ENCODE measurements at regions of chr11 and their contacts with region 1.

Region 1: GRCh38 chr11:2420502-2421225 is 20.1 kb downstream of the TSSC4 start:
- DNase-seq: peak; percentile 82 to 93 (median 91)
- ATAC-seq: peak; percentile 97
- H3K4me3 ChIP-seq: no peak overlapping the region
- H3K27ac ChIP-seq: no peak overlapping the region
- H3K4me1 ChIP-seq: peaks cover 0 to 54% of the 10 kb centered on the region in 2 experiments; a peak in 3 of 5 replicates
- H3K27me3 ChIP-seq: peaks cover 3 to 65% of the 10 kb centered on the region in 2 experiments; a peak in 4 of 5 replicates
- CTCF ChIP-seq: peak; percentile 86 to 92 (median 91)
- EP300 ChIP-seq: no peak
- POLR2A ChIP-seq: no peak
- RAD21 ChIP-seq: peak; percentile 86 to 92

Region 2: DNA sequence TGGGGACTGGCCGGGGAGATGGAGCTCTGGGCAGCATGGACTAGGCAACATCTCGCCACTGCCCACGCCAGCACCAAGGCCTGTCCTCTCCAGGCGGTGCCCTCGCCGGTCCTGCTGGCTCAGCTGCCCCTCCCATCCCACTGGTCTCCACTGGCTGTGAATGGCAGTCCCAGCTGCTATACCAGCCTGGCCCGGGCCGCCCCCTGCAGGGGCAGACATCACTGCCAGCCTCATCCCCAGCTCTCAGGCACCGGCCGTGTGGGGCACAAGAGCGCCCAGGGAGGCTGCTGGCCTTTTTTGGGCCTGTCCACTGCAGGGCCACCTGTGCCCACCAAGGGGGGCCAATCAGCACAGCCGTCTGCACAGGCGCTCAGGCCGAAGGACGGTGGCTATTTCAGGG is 393.0 kb before region 1 on chr11:
- CTCF ChIA-PET with region 1: no interaction called
- POLR2A ChIA-PET with region 1: no interaction called
- in situ Hi-C with region 1: no loop called
- intact Hi-C with region 1: no loop called
- DNase-seq: no peak
- ATAC-seq: no peak
- H3K4me3 ChIP-seq: no peak overlapping the region
- H3K27ac ChIP-seq: no peak overlapping the region
- H3K4me1 ChIP-seq: no peaks in the 10 kb centered on the region
- H3K27me3 ChIP-seq: no peaks in the 10 kb centered on the region
- CTCF ChIP-seq: no peak
- EP300 ChIP-seq: no peak
- POLR2A ChIP-seq: no peak
- RAD21 ChIP-seq: no peak

Region 3: DNA sequence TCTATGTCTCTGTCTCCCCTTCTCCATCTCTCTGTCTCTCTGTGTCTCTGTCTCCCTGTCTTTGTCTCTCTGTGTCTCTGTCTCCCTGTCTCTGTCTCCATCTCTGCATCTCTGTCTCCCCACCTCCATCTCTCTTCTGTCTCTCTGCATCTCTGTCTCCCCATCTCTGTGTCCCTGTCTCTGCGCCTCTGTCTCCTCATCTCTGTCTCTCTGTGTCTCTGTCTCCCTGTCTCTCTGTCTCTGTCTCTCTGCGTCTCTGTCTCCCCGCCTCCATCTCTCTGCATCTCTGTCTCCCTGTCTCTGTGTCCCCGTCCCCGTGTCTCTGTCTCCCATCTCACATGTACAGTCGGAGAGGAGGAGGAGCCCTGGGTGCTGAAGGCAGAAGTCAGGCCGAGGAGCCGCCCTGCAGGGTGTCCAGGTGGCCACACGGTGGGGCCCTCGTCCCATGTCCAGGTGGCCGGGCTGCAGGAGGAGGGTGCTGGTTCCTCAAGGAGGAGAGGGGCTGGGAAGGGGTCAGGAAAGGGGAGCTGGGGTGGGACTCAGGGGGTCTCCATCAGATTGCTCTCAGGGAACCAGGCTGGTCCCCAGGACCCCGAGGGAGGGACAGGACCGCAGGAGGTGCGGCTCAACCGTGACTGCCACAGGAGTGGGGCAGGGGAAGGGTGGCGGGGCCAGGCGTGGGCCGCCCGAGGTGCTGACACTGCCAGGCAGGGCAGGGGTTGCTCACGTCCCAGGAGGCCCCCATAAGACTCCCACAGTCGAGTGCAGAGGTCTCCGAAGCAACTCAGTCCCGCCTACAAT is 223.5 kb before region 1 on chr11:
- CTCF ChIA-PET with region 1: interaction called, 41 read pairs
- POLR2A ChIA-PET with region 1: interaction called, 4 read pairs
- in situ Hi-C with region 1: loop called (anchors 5 kb)
- intact Hi-C with region 1: loop called (anchors 1 kb)
- DNase-seq: peak; percentile 82 to 86 (median 84)
- ATAC-seq: peak; percentile 93
- H3K4me3 ChIP-seq: no peak overlapping the region
- H3K27ac ChIP-seq: no peak overlapping the region
- H3K4me1 ChIP-seq: peaks cover 2 to 70% of the 10 kb centered on the region in 2 experiments; a peak in 3 of 5 replicates
- H3K27me3 ChIP-seq: peaks cover 0 to 32% of the 10 kb centered on the region in 2 experiments; a peak in 2 of 5 replicates
- CTCF ChIP-seq: peak; percentile 87 to 94 (median 93)
- EP300 ChIP-seq: no peak
- POLR2A ChIP-seq: no peak
- RAD21 ChIP-seq: peak; percentile 94 to 95

Region 4: GRCh38 chr11:2202055-2202899 is 218.4 kb before region 1 on chr11:
- CTCF ChIA-PET with region 1: interaction called, 41 read pairs
- POLR2A ChIA-PET with region 1: interaction called, 4 read pairs
- in situ Hi-C with region 1: loop called (anchors 5 kb)
- intact Hi-C with region 1: loop called (anchors 1 kb)
- DNase-seq: peak in 1 of 4 experiments; percentile 36
- ATAC-seq: no peak; the same call in 2 of the 3 replicates
- H3K4me3 ChIP-seq: no peak overlapping the region
- H3K27ac ChIP-seq: no peak overlapping the region
- H3K4me1 ChIP-seq: peaks cover 0 to 55% of the 10 kb centered on the region in 2 experiments; a peak in 2 of 5 replicates
- H3K27me3 ChIP-seq: peaks cover 2 to 26% of the 10 kb centered on the region in 2 experiments; a peak in 4 of 5 replicates
- CTCF ChIP-seq: no peak
- EP300 ChIP-seq: no peak
- POLR2A ChIP-seq: no peak
- RAD21 ChIP-seq: no peak

Region 5: GRCh38 chr11:2305140-2305840 is 115.4 kb before region 1 on chr11:
- CTCF ChIA-PET with region 1: interaction called, 85 read pairs
- POLR2A ChIA-PET with region 1: interaction called, 24 read pairs
- in situ Hi-C with region 1: loop called (anchors 5 kb)
- intact Hi-C with region 1: loop called (anchors 1 kb)
- DNase-seq: peak; percentile 66 to 88 (median 70)
- ATAC-seq: peak; percentile 81
- H3K4me3 ChIP-seq: peak overlapping the region; percentile 5; the same call in 1 of the 2 replicates
- H3K27ac ChIP-seq: peak overlapping the region; percentile 47; the same call in 2 of the 3 replicates
- H3K4me1 ChIP-seq: peaks cover 59 to 92% of the 10 kb centered on the region in 2 experiments
- H3K27me3 ChIP-seq: no peaks in the 10 kb centered on the region; a peak in 1 of 5 replicates
- CTCF ChIP-seq: peak; percentile 89 to 91 (median 91)
- EP300 ChIP-seq: no peak
- POLR2A ChIP-seq: no peak
- RAD21 ChIP-seq: peak; percentile 56 to 85

Region 6: GRCh38 chr11:2314525-2315394 is 105.9 kb before region 1 on chr11:
- CTCF ChIA-PET with region 1: interaction called, 3 read pairs
- POLR2A ChIA-PET with region 1: interaction called, 3 read pairs
- in situ Hi-C with region 1: loop called (anchors 5 kb)
- intact Hi-C with region 1: no loop called
- DNase-seq: peak in 3 of 4 experiments; percentile 41 to 53 (median 46)
- ATAC-seq: no peak
- H3K4me3 ChIP-seq: no peak overlapping the region
- H3K27ac ChIP-seq: no peak overlapping the region
- H3K4me1 ChIP-seq: peaks cover 0 to 67% of the 10 kb centered on the region in 2 experiments; a peak in 2 of 5 replicates
- H3K27me3 ChIP-seq: peaks cover 6 to 36% of the 10 kb centered on the region in 2 experiments; a peak in 3 of 5 replicates
- CTCF ChIP-seq: no peak
- EP300 ChIP-seq: no peak
- POLR2A ChIP-seq: no peak
- RAD21 ChIP-seq: no peak

Region 7: GRCh38 chr11:2366261-2366660 is 54.4 kb before region 1 on chr11:
- CTCF ChIA-PET with region 1: no interaction called
- POLR2A ChIA-PET with region 1: no interaction called
- in situ Hi-C with region 1: no loop called
- intact Hi-C with region 1: no loop called
- DNase-seq: no peak
- ATAC-seq: no peak
- H3K4me3 ChIP-seq: no peak overlapping the region
- H3K27ac ChIP-seq: no peak overlapping the region
- H3K4me1 ChIP-seq: peaks cover 0 to 10% of the 10 kb centered on the region in 2 experiments; a peak in 2 of 5 replicates
- H3K27me3 ChIP-seq: peaks cover 10 to 64% of the 10 kb centered on the region in 2 experiments; a peak in 4 of 5 replicates
- CTCF ChIP-seq: no peak
- EP300 ChIP-seq: no peak
- POLR2A ChIP-seq: no peak
- RAD21 ChIP-seq: no peak

Region 8: DNA sequence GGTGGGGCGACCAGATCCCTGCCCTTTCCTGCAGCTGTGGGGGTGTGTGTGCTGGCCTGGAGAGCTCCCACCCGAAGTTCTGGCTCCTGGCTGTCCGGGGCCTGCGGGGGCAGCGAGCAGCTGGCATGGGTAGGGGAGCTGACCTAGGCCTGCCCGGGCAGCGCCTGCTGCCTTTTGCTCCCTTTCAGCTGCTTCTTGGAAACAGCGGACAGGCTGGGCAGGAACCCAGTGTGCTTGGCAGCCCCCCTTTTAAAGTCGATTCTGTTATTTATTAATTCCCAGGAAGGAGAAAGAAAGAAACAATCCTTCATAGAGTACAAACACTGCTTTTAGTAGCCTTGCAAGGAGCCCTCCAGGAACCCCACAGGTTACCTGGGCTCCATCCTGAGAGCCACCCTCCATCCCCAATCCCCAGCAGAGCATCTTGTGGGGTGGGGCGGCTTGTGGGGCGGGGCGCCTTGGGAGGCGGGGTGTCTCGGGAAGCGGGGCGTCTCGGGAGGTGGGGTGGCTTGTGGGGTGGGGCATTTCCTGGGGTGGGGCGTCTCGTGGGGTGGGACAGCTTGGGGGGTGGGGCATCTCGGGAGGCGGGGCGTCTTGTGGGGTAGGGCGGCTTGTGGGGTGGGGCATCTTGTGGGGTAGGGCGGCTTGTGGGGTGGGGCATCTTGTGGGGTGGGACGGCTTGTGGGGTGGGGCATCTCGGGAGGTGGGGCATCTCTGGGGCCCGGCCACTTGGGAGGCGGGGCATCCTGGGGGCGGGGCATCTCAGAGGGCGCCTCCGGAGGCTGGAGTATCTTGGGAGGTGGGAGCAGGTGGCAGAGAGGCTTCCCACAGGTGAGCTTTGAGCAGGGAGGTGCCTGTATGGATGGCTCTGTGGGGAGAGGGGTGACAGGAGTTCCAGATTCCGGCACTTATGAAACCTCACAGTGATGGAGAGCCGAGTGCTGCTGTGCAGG is 36.5 kb before region 1 on chr11:
- CTCF ChIA-PET with region 1: no interaction called
- POLR2A ChIA-PET with region 1: no interaction called
- in situ Hi-C with region 1: no loop called
- intact Hi-C with region 1: no loop called
- DNase-seq: peak; percentile 73 to 89 (median 86)
- ATAC-seq: peak; percentile 82
- H3K4me3 ChIP-seq: no peak overlapping the region
- H3K27ac ChIP-seq: no peak overlapping the region
- H3K4me1 ChIP-seq: peaks cover 10 to 88% of the 10 kb centered on the region in 2 experiments; a peak in 3 of 5 replicates
- H3K27me3 ChIP-seq: no peaks in the 10 kb centered on the region
- CTCF ChIP-seq: no peak
- EP300 ChIP-seq: no peak
- POLR2A ChIP-seq: no peak
- RAD21 ChIP-seq: no peak

Region 9: GRCh38 chr11:2400069-2400760 is 20.4 kb before region 1 on chr11 and contains the start of gene TSSC4:
- CTCF ChIA-PET with region 1: interaction called, 4 read pairs
- POLR2A ChIA-PET with region 1: interaction called, 3 read pairs
- in situ Hi-C with region 1: no loop called
- intact Hi-C with region 1: loop called (anchors 1 kb)
- DNase-seq: peak; percentile 93 to 99 (median 98)
- ATAC-seq: peak; percentile 91
- H3K4me3 ChIP-seq: peak within 1 kb of the TSS; percentile 87
- H3K27ac ChIP-seq: peak within 1 kb of the TSS; percentile 77
- H3K4me1 ChIP-seq: peaks cover 12 to 73% of the 10 kb centered on the region in 2 experiments; a peak in 4 of 5 replicates
- H3K27me3 ChIP-seq: no peaks in the 10 kb centered on the region
- CTCF ChIP-seq: peak; percentile 95 to 99 (median 99)
- EP300 ChIP-seq: peak; percentile 91
- POLR2A ChIP-seq: peak; percentile 92
- RAD21 ChIP-seq: peak; percentile 71 to 72
- polyA plus RNA-seq, gene TSSC4: 0.41 to 2.8 TPM

Region 10: GRCh38 chr11:2586087-2586792 is 165.6 kb after region 1 on chr11:
- CTCF ChIA-PET with region 1: no interaction called
- POLR2A ChIA-PET with region 1: no interaction called
- in situ Hi-C with region 1: no loop called
- intact Hi-C with region 1: no loop called
- DNase-seq: no peak
- ATAC-seq: no peak
- H3K4me3 ChIP-seq: no peak overlapping the region
- H3K27ac ChIP-seq: no peak overlapping the region
- H3K4me1 ChIP-seq: peaks cover 0 to 31% of the 10 kb centered on the region in 2 experiments; a peak in 1 of 5 replicates
- H3K27me3 ChIP-seq: peaks cover 11 to 79% of the 10 kb centered on the region in 2 experiments
- CTCF ChIP-seq: no peak
- EP300 ChIP-seq: no peak
- POLR2A ChIP-seq: no peak
- RAD21 ChIP-seq: no peak

Measured in K562 (cell line).